A673 (cell line): ENCODE measurements at regions of chr3 and their contacts with region 1.

Region 1: GRCh38 chr3:194315088-194315964 is 35.8 kb downstream of the CPN2 start:
- DNase-seq: peak; percentile 94
- H3K4me3 ChIP-seq: peak overlapping the region; percentile 48
- H3K27ac ChIP-seq: peak overlapping the region; percentile 87
- H3K4me1 ChIP-seq: peaks cover 37% of the 10 kb centered on the region
- H3K27me3 ChIP-seq: no peaks in the 10 kb centered on the region
- CTCF ChIP-seq: peak; percentile 92

Region 2: GRCh38 chr3:193665370-193665989 is 649.8 kb before region 1 on chr3:
- CTCF ChIA-PET with region 1: interaction called, 17 read pairs
- POLR2A ChIA-PET with region 1: interaction called, 5 read pairs
- intact Hi-C with region 1: loop called (anchors 5 kb)
- DNase-seq: peak; percentile 60
- H3K4me3 ChIP-seq: no peak overlapping the region
- H3K27ac ChIP-seq: peak overlapping the region; percentile 44
- H3K4me1 ChIP-seq: peaks cover 37% of the 10 kb centered on the region
- H3K27me3 ChIP-seq: no peaks in the 10 kb centered on the region
- CTCF ChIP-seq: peak; percentile 60

Region 3: DNA sequence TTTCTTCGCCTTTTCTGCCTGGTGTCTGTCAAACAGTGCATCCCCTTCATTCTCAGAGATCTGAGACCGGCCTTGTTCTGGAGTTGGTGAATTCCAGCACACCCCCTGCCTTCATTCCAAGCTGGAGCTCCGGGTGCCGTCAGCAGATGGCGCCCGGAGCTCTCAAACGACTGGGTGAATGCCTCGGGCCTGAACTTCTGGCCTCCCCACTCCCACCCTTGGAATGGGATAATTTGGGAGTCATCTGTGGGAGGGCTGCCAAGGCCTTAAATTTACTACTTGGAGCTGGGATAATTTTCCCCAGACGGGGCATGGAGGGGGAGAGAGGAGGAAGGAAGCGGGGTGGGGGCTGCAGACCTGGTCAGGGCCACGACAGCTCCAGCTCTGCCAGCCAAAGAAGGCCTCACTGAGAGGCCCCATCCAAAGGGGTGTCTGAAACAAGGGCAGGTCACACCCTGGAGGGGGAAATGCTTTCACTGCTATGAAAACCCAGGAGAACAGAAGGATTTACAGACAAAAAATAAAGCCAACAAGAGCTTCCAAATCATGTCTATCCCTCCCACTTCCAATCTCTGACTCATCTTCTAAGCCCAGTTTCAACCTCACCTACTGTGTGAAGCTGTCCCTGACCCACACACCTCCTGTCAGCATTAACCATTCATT is 534.4 kb before region 1 on chr3:
- CTCF ChIA-PET with region 1: interaction called, 68 read pairs
- POLR2A ChIA-PET with region 1: interaction called, 8 read pairs
- intact Hi-C with region 1: loop called (anchors 2 kb)
- DNase-seq: peak; percentile 95
- H3K4me3 ChIP-seq: no peak overlapping the region
- H3K27ac ChIP-seq: peak overlapping the region; percentile 86
- H3K4me1 ChIP-seq: peaks cover 90% of the 10 kb centered on the region
- H3K27me3 ChIP-seq: no peaks in the 10 kb centered on the region
- CTCF ChIP-seq: peak; percentile 95

Region 4: DNA sequence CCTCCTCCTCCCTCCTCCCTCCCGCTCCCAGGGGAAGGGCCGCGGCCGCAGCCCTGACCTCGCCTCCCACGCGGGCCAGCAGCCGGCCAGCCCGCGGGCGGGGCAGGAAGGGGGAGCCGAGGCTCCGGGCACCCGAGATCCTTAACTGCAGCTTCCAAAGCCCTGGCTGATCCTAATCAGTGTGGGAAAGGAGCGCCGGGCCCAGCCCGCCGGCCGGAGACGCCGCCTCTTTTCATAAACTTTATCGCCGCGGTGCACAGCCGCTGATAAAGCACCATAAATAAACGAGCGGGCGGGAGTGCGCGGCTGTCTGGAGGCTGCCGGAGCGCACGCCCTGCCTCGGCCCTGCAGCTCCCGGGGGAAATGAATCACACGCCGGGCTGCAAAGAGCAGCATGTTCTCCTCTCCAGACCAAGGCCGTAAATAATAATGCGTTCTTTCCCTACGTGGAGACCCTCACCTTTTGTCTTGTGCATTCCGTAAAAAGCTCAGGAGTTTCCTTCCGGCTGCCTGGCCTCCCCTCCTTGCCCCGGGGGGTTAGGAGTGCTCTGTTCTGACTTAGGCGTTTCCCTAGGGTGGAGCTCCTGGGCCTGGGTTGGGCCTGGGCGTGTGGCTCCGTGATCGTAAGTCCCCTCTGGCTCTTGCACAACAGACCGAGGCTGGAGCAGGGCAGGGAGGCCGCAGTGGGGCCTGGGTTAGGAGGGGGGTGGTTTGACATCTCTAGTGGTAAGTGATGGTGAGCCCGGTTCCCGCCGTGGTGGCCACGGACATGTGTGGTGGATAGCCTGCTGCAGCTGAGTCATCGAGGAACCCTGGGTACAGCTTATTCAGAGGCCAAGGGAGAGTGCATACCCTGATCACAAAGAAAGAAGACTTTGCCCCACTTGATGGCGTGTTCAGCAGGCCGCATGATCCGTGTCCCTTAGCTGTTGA is 311.9 kb before region 1 on chr3:
- CTCF ChIA-PET with region 1: no interaction called
- POLR2A ChIA-PET with region 1: no interaction called
- intact Hi-C with region 1: loop called (anchors 10 kb)
- DNase-seq: peak; percentile 91
- H3K4me3 ChIP-seq: peak overlapping the region; percentile 46
- H3K27ac ChIP-seq: peak overlapping the region; percentile 80
- H3K4me1 ChIP-seq: peaks cover 54% of the 10 kb centered on the region
- H3K27me3 ChIP-seq: no peaks in the 10 kb centered on the region
- CTCF ChIP-seq: no peak

Region 5: DNA sequence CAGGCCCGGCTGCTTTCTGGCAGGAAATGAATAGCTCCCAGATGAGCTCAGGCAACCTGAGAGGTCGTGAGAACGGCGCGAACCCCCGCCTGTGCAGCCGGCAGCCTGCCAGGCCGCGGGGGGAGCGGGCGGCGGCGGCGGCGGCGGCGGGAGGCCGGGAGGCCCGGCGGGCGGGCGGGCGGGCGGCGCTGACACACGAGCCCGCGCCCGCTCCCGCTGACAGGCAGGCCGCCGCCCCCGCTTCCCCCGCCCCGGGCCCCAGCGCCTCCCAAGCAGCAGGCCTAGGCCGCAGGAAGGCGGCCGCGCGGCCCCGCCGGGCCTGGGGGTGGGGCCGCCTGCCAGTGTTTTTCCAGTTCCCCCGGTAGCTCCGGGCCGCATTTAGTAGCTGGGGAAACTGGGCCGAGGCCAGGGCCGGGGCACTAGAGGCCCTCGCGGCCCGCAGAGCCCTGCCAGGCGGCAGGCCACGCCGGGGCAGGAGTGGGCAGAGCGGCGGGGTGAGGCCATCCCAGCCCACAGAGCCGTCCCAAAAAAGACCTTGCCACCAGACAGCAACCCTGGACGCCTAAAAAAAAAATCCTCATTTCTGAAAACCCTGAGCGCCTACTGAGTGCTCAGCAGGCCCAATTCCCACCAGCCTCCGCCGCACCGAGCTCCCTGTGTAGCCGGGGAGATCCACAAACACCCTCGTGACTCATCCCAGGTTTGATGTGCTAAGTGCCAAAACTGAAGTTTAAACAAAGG is 173.7 kb before region 1 on chr3:
- CTCF ChIA-PET with region 1: interaction called, 20 read pairs
- POLR2A ChIA-PET with region 1: interaction called, 6 read pairs
- intact Hi-C with region 1: loop called (anchors 1 kb)
- DNase-seq: peak; percentile 93
- H3K4me3 ChIP-seq: peak overlapping the region; percentile 93
- H3K27ac ChIP-seq: peak overlapping the region; percentile 98
- H3K4me1 ChIP-seq: peaks cover 26% of the 10 kb centered on the region
- H3K27me3 ChIP-seq: no peaks in the 10 kb centered on the region
- CTCF ChIP-seq: no peak

Region 6: DNA sequence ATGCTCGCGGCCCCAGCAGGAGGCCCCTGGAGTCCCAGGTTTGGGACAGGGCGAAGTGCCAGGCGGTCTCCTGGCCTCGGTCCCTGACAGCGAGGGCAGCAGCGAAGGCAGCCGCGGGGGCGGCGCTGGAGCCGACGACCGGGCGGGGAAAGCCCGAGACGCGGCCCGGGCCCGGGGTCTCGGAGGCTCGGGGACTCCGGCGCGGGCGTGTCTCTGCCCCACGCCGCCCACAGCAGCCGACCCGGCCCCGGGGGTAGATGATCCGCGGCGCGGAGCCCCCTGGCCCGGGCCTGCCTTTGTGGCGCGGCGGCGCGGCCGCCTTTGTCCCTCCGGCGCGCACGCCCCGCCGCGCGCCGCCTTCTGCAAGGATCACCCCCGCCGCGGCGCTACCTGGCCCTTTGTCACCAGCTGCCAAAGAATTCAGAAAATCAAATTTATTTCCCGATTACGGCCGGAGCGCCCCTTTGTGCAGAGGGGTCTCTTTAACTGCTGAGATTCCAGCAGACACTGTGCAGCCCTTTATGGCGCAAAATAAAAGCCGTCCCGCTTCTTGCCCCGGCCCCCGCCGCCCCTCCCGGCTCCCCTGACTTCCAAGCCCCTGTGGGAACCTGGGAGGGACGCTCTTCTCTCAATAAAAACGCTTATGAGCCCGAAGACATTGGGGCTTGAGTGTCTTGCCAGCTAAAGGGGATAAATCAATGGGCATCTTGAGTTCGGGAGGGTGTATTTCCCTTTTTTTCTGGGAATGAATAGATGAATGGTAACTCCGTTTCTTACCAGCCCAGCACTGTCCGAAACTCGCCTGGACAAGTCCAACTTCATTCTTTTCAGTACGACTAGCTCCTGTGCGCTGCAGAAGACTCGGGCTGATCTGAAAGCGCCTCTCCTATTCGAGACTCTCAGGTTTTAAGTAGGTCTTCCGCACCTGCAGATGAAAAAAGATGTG is 111.0 kb before region 1 on chr3:
- CTCF ChIA-PET with region 1: no interaction called
- POLR2A ChIA-PET with region 1: no interaction called
- intact Hi-C with region 1: loop called (anchors 2 kb)
- DNase-seq: peak; percentile 40
- H3K4me3 ChIP-seq: peak overlapping the region; percentile 35
- H3K27ac ChIP-seq: peak overlapping the region; percentile 17
- H3K4me1 ChIP-seq: peaks cover 29% of the 10 kb centered on the region
- H3K27me3 ChIP-seq: no peaks in the 10 kb centered on the region
- CTCF ChIP-seq: no peak